Natural killer cell (primary cell): ENCODE measurements at regions of chr10 and their contacts with region 1.

Region 1: GRCh38 chr10:22714479-22715289 is at the start of gene PIP4K2A:
- DNase-seq: peak; percentile 79 to 91
- ATAC-seq: peak; percentile 78 to 91 (median 88)
- H3K4me3 ChIP-seq: peak within 1 kb of the TSS; percentile 98
- H3K4me3 Mint-ChIP-seq: peak within 1 kb of the TSS; percentile 94
- H3K27ac ChIP-seq: peak within 1 kb of the TSS; percentile 94
- H3K27ac Mint-ChIP-seq: peak within 1 kb of the TSS; percentile 82 to 87
- H3K4me1 ChIP-seq: peaks cover 14% of the 10 kb centered on the region
- H3K4me1 Mint-ChIP-seq: peaks cover 34 to 35% of the 10 kb centered on the region in 2 donors
- H3K27me3 ChIP-seq: no peaks in the 10 kb centered on the region
- H3K27me3 Mint-ChIP-seq: no peaks in the 10 kb centered on the region
- CTCF ChIP-seq: no peak
- total RNA-seq, gene PIP4K2A: 311 to 423 (median 405) TPM

Region 2: DNA sequence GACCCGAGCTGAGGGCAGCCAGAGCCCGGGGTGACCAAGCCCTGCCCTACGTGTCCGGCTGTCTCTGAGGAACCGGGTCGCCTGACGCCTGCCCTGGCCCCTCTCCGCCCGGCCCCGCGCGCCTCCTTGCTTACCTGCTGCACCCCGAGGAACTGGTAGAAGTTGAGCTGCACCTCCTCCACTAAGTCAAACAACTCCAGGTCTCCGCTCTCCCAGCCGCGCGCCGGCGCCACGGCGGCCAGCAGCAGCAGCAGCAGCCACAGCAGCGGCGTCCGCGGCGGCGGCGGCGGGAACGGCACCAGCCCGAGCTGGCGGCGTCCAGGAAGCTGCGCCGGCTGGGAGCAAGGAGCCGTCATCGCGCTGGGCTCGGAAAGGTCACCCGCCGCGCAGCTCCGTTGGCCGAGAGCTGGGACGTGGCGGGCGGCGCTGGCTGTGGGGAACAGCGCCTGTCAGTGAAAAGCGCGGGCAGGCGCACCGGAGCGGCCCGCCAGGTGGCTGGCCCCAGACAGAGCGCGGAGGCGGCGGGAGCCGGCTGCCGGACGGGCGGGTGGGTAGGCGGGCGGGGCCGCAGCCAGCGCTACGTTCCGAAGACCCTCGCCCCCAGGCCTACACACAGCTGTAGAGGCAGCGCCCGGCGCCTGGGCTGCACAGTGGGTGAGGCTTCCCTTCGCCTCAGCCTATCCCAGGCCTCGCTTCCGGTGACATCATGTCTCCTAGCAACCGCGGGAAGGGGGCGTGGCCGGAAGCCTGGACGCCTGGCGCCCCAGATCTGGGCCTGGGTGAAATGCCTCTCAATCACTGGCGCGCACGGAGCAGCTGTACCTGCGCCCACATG is 711.4 kb before region 1 on chr10 and contains the start of gene DNAJC1:
- intact Hi-C with region 1: loop called (anchors 5 kb)
- DNase-seq: peak; percentile 96 to 98
- ATAC-seq: peak; percentile 84 to 96 (median 89)
- H3K4me3 ChIP-seq: peak within 1 kb of the TSS; percentile 96
- H3K4me3 Mint-ChIP-seq: peak within 1 kb of the TSS; percentile 91
- H3K27ac ChIP-seq: peak within 1 kb of the TSS; percentile 97
- H3K27ac Mint-ChIP-seq: peak within 1 kb of the TSS; percentile 85 to 88
- H3K4me1 ChIP-seq: peaks cover 4% of the 10 kb centered on the region
- H3K4me1 Mint-ChIP-seq: peaks cover 38 to 45% of the 10 kb centered on the region in 2 donors
- H3K27me3 ChIP-seq: no peaks in the 10 kb centered on the region
- H3K27me3 Mint-ChIP-seq: peaks cover 0 to 5% of the 10 kb centered on the region in 2 donors
- CTCF ChIP-seq: peak; percentile 9
- total RNA-seq, gene DNAJC1: 38.4 to 63.7 (median 50.6) TPM

Region 3: GRCh38 chr10:22505911-22506685 is 208.6 kb before region 1 on chr10:
- intact Hi-C with region 1: loop called (anchors 10 kb)
- DNase-seq: peak; percentile 72 to 81
- ATAC-seq: peak; percentile 93 to 99 (median 99)
- H3K4me3 ChIP-seq: no peak overlapping the region
- H3K4me3 Mint-ChIP-seq: peak overlapping the region; percentile 85
- H3K27ac ChIP-seq: peak overlapping the region; percentile 54
- H3K27ac Mint-ChIP-seq: peak overlapping the region; percentile 86 to 89
- H3K4me1 ChIP-seq: peaks cover 32% of the 10 kb centered on the region
- H3K4me1 Mint-ChIP-seq: peaks cover 63 to 67% of the 10 kb centered on the region in 2 donors
- H3K27me3 ChIP-seq: no peaks in the 10 kb centered on the region
- H3K27me3 Mint-ChIP-seq: peaks cover 0 to 7% of the 10 kb centered on the region in 2 donors
- CTCF ChIP-seq: no peak

Region 4: GRCh38 chr10:22597138-22597537 is 117.5 kb before region 1 on chr10:
- intact Hi-C with region 1: no loop called
- DNase-seq: peak; percentile 61 to 79
- ATAC-seq: peak; percentile 89 to 98 (median 97)
- H3K4me3 ChIP-seq: no peak overlapping the region
- H3K4me3 Mint-ChIP-seq: peak overlapping the region; percentile 85
- H3K27ac ChIP-seq: peak overlapping the region; percentile 79
- H3K27ac Mint-ChIP-seq: peak overlapping the region; percentile 99
- H3K4me1 ChIP-seq: peaks cover 76% of the 10 kb centered on the region
- H3K4me1 Mint-ChIP-seq: peaks cover 82 to 84% of the 10 kb centered on the region in 2 donors
- H3K27me3 ChIP-seq: no peaks in the 10 kb centered on the region
- H3K27me3 Mint-ChIP-seq: no peaks in the 10 kb centered on the region
- CTCF ChIP-seq: no peak

Region 5: DNA sequence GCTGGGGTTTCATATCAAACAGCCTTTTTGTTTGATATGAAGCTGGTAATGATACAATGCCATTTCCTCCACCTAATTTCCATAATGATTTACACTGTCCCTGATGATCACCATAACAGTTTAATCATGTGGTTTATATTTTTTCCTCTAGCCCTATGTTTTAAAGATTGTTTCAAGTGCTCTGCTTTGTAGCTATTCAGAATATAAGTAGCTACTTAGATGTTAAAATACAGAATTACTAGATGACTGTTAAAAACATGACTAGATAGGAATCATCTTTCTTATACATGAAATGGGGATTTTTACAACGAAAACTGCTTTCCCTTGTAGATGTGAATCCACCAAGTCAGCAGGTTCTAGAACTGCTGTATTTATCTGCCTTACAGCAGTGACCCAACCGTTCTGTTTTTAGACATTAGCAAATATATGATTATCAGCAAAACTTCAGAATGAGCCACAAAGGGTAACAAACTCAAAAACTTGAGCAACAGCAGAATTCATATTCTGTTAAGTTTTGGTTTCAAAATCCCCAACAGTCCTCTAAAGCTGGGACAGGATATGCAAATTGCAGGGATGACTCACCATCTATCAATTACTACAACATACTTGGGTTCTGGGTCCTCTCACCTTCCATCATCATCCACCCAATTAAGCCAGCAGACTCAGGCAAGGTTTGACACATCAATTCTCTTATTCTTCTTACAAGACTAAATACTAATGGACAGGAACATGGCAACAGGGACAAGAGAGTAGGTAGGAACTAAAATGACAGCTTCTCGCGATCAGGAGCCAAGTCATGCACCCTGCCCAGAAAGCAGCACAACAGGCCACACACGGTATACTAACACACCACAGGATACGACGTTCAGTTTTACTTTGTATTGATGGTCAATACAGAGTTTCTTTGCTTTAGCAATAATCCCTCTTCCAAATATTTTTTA is 84.2 kb before region 1 on chr10:
- intact Hi-C with region 1: loop called (anchors 2 kb)
- DNase-seq: peak in 1 of 2 donors; percentile 87
- ATAC-seq: peak; percentile 67 to 81 (median 73)
- H3K4me3 ChIP-seq: peak overlapping the region; percentile 25
- H3K4me3 Mint-ChIP-seq: peak overlapping the region; percentile 90
- H3K27ac ChIP-seq: peak overlapping the region; percentile 97
- H3K27ac Mint-ChIP-seq: peak overlapping the region; percentile 99
- H3K4me1 ChIP-seq: peaks cover 64% of the 10 kb centered on the region
- H3K4me1 Mint-ChIP-seq: peaks cover 94 to 96% of the 10 kb centered on the region in 2 donors
- H3K27me3 ChIP-seq: no peaks in the 10 kb centered on the region
- H3K27me3 Mint-ChIP-seq: no peaks in the 10 kb centered on the region
- CTCF ChIP-seq: no peak

Region 6: DNA sequence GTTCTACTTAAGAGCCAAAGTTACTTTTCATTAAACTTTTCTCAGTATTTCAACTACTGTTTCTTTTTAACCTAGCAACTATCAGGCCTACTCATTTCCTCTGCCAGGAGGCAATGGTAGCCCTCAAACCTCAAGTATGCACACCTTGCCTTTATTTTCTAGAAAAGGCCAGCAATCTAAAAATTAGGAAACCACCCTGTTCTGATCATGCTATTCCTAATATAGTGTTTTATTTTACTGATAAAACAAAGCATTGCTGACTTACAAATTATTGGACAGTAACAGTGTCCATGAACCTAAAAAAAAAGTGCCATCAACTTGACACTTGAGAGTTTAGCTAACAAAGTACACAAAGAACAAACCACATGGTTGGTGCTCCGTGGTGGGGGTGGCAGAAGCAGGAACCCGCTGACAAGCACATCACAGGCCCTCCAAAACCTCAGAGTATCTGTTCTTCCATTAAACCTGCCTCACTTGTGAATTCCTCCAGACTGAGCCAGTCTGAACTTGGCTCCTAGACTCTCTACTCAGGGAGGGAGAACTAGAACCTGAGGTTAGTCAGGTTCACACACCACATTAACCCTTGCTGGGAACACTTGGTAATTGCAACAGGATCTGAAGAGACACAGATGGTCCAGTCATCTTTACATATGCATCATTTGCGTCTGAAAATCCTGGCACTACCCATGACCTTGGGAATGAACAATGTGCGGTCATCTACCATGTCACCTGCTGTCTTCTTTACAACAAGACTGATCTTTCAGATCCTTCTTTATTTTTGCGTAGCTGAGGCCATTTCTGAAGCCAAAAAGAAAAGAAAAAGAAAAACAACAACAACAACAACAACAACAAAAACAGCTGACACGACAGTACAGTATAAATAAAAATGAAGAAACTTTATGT is 32.2 kb before region 1 on chr10:
- intact Hi-C with region 1: loop called (anchors 2 kb)
- DNase-seq: peak; percentile 62 to 84
- ATAC-seq: peak; percentile 46 to 76 (median 71)
- H3K4me3 ChIP-seq: no peak overlapping the region
- H3K4me3 Mint-ChIP-seq: peak overlapping the region; percentile 85
- H3K27ac ChIP-seq: peak overlapping the region; percentile 94
- H3K27ac Mint-ChIP-seq: peak overlapping the region; percentile 92 to 99
- H3K4me1 ChIP-seq: peaks cover 63% of the 10 kb centered on the region
- H3K4me1 Mint-ChIP-seq: peaks cover 86 to 90% of the 10 kb centered on the region in 2 donors
- H3K27me3 ChIP-seq: no peaks in the 10 kb centered on the region
- H3K27me3 Mint-ChIP-seq: no peaks in the 10 kb centered on the region
- CTCF ChIP-seq: no peak

Region 7: GRCh38 chr10:22693371-22693784 is 21.3 kb before region 1 on chr10:
- intact Hi-C with region 1: no loop called
- DNase-seq: peak in 1 of 2 donors; percentile 48
- ATAC-seq: peak; percentile 89 to 93 (median 90)
- H3K4me3 ChIP-seq: no peak overlapping the region
- H3K4me3 Mint-ChIP-seq: peak overlapping the region; percentile 84
- H3K27ac ChIP-seq: peak overlapping the region; percentile 62
- H3K27ac Mint-ChIP-seq: peak overlapping the region; percentile 79 to 99
- H3K4me1 ChIP-seq: peaks cover 48% of the 10 kb centered on the region
- H3K4me1 Mint-ChIP-seq: peaks cover 76 to 84% of the 10 kb centered on the region in 2 donors
- H3K27me3 ChIP-seq: no peaks in the 10 kb centered on the region
- H3K27me3 Mint-ChIP-seq: no peaks in the 10 kb centered on the region
- CTCF ChIP-seq: no peak